SK-N-SH (cell line): ENCODE measurements at regions of chr11 and their contacts with region 1.

Region 1: GRCh38 chr11:46537537-46538295 is 56.1 kb downstream of the AMBRA1 start:
- DNase-seq: peak; percentile 77
- H3K4me3 ChIP-seq: peak overlapping the region in 1 of 2 experiments; percentile 28; a peak in 1 of 4 replicates
- H3K27ac ChIP-seq: no peak overlapping the region
- H3K4me1 ChIP-seq: peaks cover 0 to 6% of the 10 kb centered on the region in 2 experiments; a peak in 2 of 4 replicates
- H3K27me3 ChIP-seq: no peaks in the 10 kb centered on the region
- CTCF ChIP-seq: peak; percentile 92
- EP300 ChIP-seq: no peak
- RAD21 ChIP-seq: peak; percentile 96

Region 2: DNA sequence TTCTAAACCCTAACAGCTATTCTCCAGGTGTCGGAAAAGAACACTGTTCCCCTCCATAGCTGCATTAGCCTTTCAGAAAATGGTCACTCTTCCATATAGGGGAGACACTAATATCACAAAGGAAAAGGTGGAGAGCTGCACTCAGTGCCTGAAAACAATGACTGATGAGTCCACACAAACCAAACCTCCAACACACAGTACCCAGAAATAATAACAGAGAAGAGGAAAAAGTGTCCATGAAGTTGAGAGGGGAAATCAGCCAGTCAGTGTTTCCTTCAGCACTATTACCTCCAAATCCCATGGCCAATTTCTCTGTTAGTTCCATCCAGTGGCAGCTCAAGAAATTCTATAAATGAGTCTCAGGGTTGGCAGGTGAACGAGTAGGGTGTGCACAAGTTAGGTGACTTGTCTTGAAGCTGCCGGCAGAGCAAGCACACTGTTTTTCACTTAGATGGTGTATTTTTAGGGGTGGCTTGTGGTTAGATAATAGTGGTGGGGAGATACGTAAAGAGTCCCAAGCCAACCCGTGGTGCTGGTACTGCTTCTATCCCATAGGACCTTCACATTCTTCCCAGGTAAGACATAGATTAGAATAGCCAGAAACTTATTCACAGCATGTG is 61.7 kb before region 1 on chr11:
- CTCF ChIA-PET with region 1: interaction called, 16 read pairs
- POLR2A ChIA-PET with region 1: no interaction called
- DNase-seq: no peak
- H3K4me3 ChIP-seq: no peak overlapping the region
- H3K27ac ChIP-seq: no peak overlapping the region
- H3K4me1 ChIP-seq: peaks cover 3 to 19% of the 10 kb centered on the region in 2 experiments; a peak in 3 of 4 replicates
- H3K27me3 ChIP-seq: no peaks in the 10 kb centered on the region
- CTCF ChIP-seq: no peak
- EP300 ChIP-seq: no peak
- RAD21 ChIP-seq: no peak

Region 3: DNA sequence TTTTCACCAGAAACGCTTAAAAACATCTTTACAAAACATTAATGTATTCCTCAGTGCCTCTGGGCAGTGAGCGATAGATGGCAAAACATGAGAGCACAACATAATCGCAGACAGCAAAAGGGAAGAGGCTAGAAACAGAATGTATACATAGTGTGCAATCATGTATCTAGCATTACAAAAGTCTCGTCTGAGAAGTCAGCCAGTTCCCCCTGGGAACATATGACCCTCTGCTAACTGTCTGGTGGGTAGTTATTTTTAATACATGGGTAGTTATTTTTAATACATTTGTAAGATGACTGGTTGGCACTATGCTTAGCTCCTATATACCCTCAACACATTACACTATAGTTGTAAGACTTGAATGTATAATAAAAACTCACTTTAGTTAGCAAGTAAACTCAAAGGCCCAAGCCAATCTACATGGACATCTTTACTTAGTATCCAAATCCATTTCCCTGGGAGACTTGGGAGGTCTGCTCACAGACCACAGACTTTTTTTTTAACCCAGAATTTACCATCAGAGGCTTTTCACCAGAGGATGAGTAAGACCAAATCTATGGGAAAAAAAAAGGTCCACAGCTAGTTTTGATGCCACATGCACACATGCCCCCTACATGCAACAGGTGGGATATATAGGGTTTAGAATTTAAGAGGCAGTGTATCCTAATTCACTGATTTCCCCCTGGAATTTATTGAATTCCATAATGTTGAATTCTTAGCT is 15.6 kb before region 1 on chr11:
- CTCF ChIA-PET with region 1: interaction called, 10 read pairs
- POLR2A ChIA-PET with region 1: no interaction called
- DNase-seq: no peak
- H3K4me3 ChIP-seq: no peak overlapping the region
- H3K27ac ChIP-seq: no peak overlapping the region
- H3K4me1 ChIP-seq: peaks cover 6 to 40% of the 10 kb centered on the region in 2 experiments; a peak in 3 of 4 replicates
- H3K27me3 ChIP-seq: no peaks in the 10 kb centered on the region
- CTCF ChIP-seq: peak; percentile 48
- EP300 ChIP-seq: no peak
- RAD21 ChIP-seq: peak; percentile 38

Region 4: GRCh38 chr11:46588131-46588530 is 50.4 kb after region 1 on chr11:
- CTCF ChIA-PET with region 1: no interaction called
- POLR2A ChIA-PET with region 1: no interaction called
- DNase-seq: no peak
- H3K4me3 ChIP-seq: no peak overlapping the region
- H3K27ac ChIP-seq: no peak overlapping the region
- H3K4me1 ChIP-seq: peaks cover 3 to 26% of the 10 kb centered on the region in 2 experiments; a peak in 2 of 4 replicates
- H3K27me3 ChIP-seq: no peaks in the 10 kb centered on the region
- CTCF ChIP-seq: no peak
- EP300 ChIP-seq: no peak
- RAD21 ChIP-seq: no peak